Body of pancreas (tissue), 4 donors: ENCODE measurements at regions of chr12 and their contacts with region 1.

Region 1: DNA sequence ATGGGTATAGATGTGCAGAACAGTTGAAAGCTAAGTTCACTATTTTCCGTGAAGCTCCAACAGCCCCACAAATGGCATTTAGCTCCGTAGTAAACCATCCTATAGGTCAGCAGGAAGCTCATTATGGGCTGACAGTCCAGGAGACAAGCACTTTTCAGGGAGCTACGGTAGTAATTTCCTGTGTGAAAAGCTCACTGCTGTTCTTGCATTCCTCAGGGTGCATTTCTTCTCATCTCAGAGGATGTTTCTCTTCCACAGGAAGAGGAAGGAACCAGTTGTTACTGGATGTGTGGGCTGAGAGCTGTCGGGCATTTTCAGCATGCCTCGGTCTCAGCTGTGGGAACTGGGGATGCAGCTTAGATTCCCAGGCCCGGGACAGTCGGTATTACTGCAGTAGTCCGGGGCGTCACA is 72.8 kb downstream of the GALNT4 start:
- DNase-seq: peak in 1 of 4 donors; percentile 12
- ATAC-seq: no peak
- H3K4me3 ChIP-seq: no peak overlapping the region
- H3K27ac ChIP-seq: peak overlapping the region in 2 of 4 donors; percentile 7 to 16
- H3K4me1 ChIP-seq: no peaks in the 10 kb centered on the region
- H3K27me3 ChIP-seq: no peaks in the 10 kb centered on the region
- CTCF ChIP-seq: no peak
- POLR2A ChIP-seq: no peak

Region 2: GRCh38 chr12:89319122-89319521 is 132.7 kb before region 1 on chr12:
- intact Hi-C with region 1: no loop called
- DNase-seq: peak in 3 of 4 donors; percentile 30 to 37 (median 37)
- ATAC-seq: peak; percentile 74
- H3K4me3 ChIP-seq: no peak overlapping the region
- H3K27ac ChIP-seq: peak overlapping the region in 1 of 4 donors; percentile 23
- H3K4me1 ChIP-seq: peaks cover 20% of the 10 kb centered on the region
- H3K27me3 ChIP-seq: no peaks in the 10 kb centered on the region
- CTCF ChIP-seq: no peak
- POLR2A ChIP-seq: no peak

Region 3: DNA sequence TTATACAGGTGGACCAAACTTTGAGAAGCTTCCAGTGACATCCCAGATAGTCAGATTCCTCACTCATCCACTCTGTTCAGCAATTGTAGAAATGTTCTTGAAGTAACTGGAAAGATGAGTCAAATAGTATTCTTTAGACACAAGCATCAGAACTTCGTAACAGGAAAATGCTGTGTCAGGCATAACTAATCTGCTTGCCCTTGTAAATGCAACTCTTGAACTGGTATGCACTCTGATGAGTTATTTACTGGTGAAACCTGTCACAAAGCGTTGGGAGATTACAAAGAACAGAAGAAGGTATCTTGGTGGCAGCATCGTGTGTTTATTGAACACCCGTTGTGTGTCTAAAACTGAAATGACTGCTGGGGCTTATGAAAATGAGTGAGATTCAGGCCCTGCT is 88.8 kb before region 1 on chr12:
- intact Hi-C with region 1: loop called (anchors 10 kb)
- DNase-seq: no peak
- ATAC-seq: no peak
- H3K4me3 ChIP-seq: no peak overlapping the region
- H3K27ac ChIP-seq: no peak overlapping the region
- H3K4me1 ChIP-seq: peaks cover 15% of the 10 kb centered on the region
- H3K27me3 ChIP-seq: no peaks in the 10 kb centered on the region
- CTCF ChIP-seq: no peak
- POLR2A ChIP-seq: no peak